HepG2 (cell line): ENCODE measurements at regions of chr3 and their contacts with region 1.

Region 1: DNA sequence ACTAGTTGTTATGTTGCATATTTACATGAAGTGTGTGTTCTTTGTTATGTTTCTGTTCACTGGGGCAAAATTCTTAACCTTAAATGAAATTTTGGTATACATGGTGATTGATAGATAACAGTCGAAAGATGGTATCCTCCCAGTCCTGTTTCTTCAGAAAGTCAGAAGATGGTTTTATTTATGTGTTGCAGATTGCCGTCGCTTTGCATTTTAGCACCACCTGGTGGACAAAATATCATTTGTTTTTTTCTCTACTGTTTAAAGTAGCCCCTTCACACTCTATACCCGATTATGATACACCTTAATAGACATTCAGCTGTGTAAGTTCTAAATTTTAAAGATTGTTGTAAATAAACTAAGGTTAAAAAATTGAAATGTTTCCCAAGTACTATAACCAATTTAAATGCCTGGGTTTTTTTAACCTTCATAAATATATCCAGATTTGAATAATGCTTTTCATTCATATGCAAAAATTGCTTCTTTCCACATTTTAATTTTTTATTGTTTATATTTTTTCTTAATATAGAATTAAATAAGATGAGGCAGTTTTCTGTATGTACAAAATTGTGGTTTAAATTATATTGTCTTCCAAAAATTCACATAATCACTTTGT is 152.2 kb downstream of the ALCAM start:
- DNase-seq: peak; percentile 35
- ATAC-seq: peak; percentile 78
- H3K4me3 ChIP-seq: no peak overlapping the region
- H3K27ac ChIP-seq: no peak overlapping the region
- H3K4me1 ChIP-seq: no peaks in the 10 kb centered on the region
- H3K27me3 ChIP-seq: no peaks in the 10 kb centered on the region
- CTCF ChIP-seq: peak; percentile 73
- EP300 ChIP-seq: no peak
- POLR2A ChIP-seq: no peak
- RAD21 ChIP-seq: peak; percentile 66

Region 2: GRCh38 chr3:104596551-104596950 is 922.4 kb before region 1 on chr3:
- CTCF ChIA-PET with region 1: no interaction called
- POLR2A ChIA-PET with region 1: no interaction called
- in situ Hi-C with region 1: loop called (anchors 25 kb)
- intact Hi-C with region 1: loop called (anchors 1 kb)
- DNase-seq: peak; percentile 25
- ATAC-seq: peak; percentile 88
- H3K4me3 ChIP-seq: no peak overlapping the region
- H3K27ac ChIP-seq: no peak overlapping the region
- H3K4me1 ChIP-seq: no peaks in the 10 kb centered on the region
- H3K27me3 ChIP-seq: no peaks in the 10 kb centered on the region
- CTCF ChIP-seq: peak; percentile 60
- EP300 ChIP-seq: no peak
- POLR2A ChIP-seq: no peak
- RAD21 ChIP-seq: no peak

Region 3: GRCh38 chr3:105222568-105223093 is 296.3 kb before region 1 on chr3:
- CTCF ChIA-PET with region 1: interaction called, 12 read pairs
- POLR2A ChIA-PET with region 1: no interaction called
- in situ Hi-C with region 1: loop called (anchors 25 kb)
- intact Hi-C with region 1: loop called (anchors 1 kb)
- DNase-seq: peak; percentile 17
- ATAC-seq: peak; percentile 91
- H3K4me3 ChIP-seq: no peak overlapping the region
- H3K27ac ChIP-seq: no peak overlapping the region
- H3K4me1 ChIP-seq: no peaks in the 10 kb centered on the region
- H3K27me3 ChIP-seq: no peaks in the 10 kb centered on the region
- CTCF ChIP-seq: peak; percentile 67
- EP300 ChIP-seq: no peak
- POLR2A ChIP-seq: no peak
- RAD21 ChIP-seq: no peak

Region 4: GRCh38 chr3:105429034-105429762 is 89.7 kb before region 1 on chr3:
- CTCF ChIA-PET with region 1: no interaction called
- POLR2A ChIA-PET with region 1: no interaction called
- in situ Hi-C with region 1: no loop called
- intact Hi-C with region 1: loop called (anchors 5 kb)
- DNase-seq: peak; percentile 5
- ATAC-seq: no peak
- H3K4me3 ChIP-seq: no peak overlapping the region
- H3K27ac ChIP-seq: peak overlapping the region; percentile 24
- H3K4me1 ChIP-seq: peaks cover 28% of the 10 kb centered on the region
- H3K27me3 ChIP-seq: no peaks in the 10 kb centered on the region
- CTCF ChIP-seq: no peak
- EP300 ChIP-seq: no peak
- POLR2A ChIP-seq: no peak
- RAD21 ChIP-seq: no peak

Region 5: DNA sequence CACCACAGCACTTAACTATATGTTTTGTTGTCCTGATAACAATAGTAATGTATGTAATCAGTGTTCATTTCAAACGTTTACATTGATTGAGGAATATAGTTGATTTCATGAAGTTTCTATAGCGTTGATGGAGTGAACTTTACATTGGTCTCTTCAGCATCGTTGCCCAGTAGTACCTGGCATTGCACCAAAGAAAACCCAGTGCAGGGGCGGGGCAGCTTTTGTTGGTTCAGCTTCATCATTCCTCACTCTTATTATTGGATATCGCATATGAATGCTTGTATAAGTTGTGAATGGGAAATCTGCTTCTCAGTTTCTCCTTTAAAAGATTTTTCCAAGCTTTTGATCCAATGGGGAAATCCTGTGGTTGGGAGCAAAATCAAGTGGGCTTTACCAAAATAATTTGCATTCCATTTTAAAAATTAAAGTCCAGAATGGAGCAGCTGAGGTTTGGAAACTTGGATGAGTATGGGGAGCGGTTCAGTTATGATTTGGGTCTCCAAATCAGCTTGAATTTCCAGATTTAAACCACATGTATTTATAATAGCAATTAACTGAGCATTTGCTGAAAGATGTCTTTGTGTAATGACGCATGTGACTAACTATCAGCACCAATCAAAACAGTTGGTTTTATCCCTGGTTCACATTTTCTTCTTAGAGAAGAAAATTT is 61.5 kb after region 1 on chr3:
- CTCF ChIA-PET with region 1: no interaction called
- POLR2A ChIA-PET with region 1: no interaction called
- in situ Hi-C with region 1: no loop called
- intact Hi-C with region 1: no loop called
- DNase-seq: no peak
- ATAC-seq: no peak
- H3K4me3 ChIP-seq: no peak overlapping the region
- H3K27ac ChIP-seq: no peak overlapping the region
- H3K4me1 ChIP-seq: no peaks in the 10 kb centered on the region
- H3K27me3 ChIP-seq: no peaks in the 10 kb centered on the region
- CTCF ChIP-seq: no peak
- EP300 ChIP-seq: no peak
- POLR2A ChIP-seq: no peak
- RAD21 ChIP-seq: no peak